Naive thymus-derived CD4-positive, alpha-beta T cell (primary cell): ENCODE measurements at regions of chr1 and their contacts with region 1.

Region 1: DNA sequence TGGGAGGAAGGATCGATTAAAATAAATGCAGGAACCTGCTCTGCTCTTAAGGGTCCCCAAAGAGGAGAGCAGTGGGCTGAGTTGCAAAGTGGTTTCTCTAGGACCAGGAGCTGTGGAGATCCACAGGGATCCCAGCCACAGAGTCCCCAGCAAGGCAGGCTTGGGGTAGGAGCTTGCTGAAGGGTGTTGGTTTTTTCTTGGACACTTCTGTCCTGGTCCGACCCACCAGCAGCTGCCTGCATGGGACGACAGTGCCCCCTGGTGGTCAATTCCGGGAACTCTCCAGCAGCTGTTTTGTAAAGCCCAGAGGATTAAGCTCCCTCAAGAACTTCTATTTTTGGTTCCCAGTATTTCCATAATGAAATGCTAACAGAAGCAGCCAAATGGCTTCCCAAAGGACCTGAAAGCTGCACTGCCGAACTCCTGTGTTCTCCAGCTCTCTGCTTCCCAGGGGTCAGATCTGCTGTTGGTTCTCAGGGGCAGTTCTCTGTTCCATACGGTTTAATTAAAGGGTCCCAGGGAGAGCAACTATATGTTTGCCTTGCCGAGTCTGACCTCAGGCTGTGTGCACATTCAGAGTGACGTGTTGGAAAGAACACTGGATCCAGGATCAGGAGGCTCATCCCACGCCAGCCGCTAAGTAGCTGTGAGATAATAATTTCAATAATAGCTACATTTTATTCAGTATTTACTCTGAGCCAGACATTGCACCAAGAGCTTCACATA is 23.2 kb downstream of the NENF start:
- DNase-seq: peak; percentile 53 to 84 (median 69)
- ATAC-seq: peak; percentile 84
- H3K4me3 ChIP-seq: no peak overlapping the region
- H3K4me3 Mint-ChIP-seq: no peak overlapping the region
- H3K27ac ChIP-seq: no peak overlapping the region
- H3K27ac Mint-ChIP-seq: no peak overlapping the region
- H3K4me1 ChIP-seq: no peaks in the 10 kb centered on the region
- H3K4me1 Mint-ChIP-seq: peaks cover 0 to 12% (median 0%) of the 10 kb centered on the region in 7 donors
- H3K27me3 ChIP-seq: no peaks in the 10 kb centered on the region
- H3K27me3 Mint-ChIP-seq: no peaks in the 10 kb centered on the region

Region 2: DNA sequence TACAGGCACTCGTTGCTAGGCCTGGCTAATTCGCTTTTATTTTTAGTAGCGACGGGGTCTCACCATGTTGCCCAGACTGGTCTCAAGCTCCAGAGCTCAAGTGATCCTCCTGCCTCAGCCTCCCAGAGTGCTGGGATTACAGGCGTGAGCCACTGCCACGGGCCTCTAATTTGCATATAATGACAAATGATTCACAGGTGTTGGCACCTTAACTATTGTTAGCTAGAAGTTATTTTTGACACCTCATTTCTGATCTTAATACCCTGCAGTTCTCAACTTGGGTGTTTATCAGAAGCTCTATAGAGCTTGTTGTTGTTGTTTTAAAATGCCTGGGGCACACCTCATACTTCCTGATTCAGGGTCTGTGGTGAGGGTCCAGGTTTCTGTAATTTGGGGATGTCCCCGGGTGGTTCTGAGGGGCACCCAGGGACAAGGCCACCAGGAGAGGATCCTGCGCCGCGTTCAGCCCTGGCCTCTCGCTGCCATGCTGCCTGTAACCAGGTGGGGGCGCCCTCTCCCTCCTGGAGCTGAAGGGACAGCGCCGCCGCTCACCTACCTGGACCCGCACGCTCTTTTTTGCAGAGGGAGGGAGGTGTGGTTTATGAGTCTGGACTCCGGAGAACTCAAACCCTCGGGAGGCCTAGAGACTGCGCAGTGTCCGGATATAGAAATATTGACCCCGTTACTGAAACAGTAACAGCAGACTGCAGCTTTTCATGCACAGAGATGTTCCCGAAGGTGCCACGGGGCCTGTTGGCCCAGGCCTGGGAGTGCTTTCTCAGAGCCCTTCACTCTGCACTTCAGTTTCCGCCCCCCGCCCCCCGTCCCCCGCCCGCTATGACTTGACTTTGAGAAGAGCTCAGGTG is 757.6 kb before region 1 on chr1:
- CTCF ChIA-PET with region 1: interaction called, 6 read pairs
- POLR2A ChIA-PET with region 1: no interaction called
- intact Hi-C with region 1: loop called (anchors 5 kb)
- DNase-seq: peak; percentile 60 to 87 (median 72)
- ATAC-seq: peak; percentile 96
- H3K4me3 ChIP-seq: no peak overlapping the region
- H3K4me3 Mint-ChIP-seq: peak overlapping the region; percentile 23 to 83 (median 65)
- H3K27ac ChIP-seq: no peak overlapping the region
- H3K27ac Mint-ChIP-seq: peak overlapping the region in 2 of 9 donors; percentile 5 to 62
- H3K4me1 ChIP-seq: peaks cover 4 to 16% of the 10 kb centered on the region in 2 donors
- H3K4me1 Mint-ChIP-seq: peaks cover 0 to 42% (median 9%) of the 10 kb centered on the region in 7 donors
- H3K27me3 ChIP-seq: no peaks in the 10 kb centered on the region
- H3K27me3 Mint-ChIP-seq: peaks cover 0 to 37% (median 0%) of the 10 kb centered on the region in 5 donors

Region 3: DNA sequence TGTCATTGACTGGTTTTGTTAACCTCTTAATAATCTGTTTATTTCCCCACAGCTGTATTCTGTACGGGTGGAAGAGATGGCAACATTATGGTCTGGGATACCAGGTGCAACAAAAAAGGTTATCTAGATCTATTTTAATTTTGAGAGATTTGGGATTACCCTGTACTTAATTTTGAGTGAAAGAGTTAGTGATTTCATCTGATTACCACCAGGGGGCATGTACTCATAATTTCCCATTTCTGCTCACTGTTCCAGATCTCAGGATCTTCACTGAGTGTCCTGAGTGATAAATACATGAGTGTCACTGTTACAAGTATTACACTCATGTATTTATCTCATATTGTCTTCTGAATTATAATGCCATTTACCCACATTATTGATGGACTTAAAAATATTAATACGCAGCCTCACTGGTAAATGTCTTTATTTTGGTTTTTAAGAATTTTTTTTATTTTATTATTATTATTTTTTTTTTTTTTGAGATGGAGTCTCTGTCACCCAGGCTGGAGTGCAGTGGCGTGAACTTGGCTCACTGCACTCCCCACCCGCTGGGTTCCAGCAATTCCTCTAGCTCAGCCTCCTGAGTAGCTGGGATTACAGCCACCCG is 393.0 kb before region 1 on chr1:
- CTCF ChIA-PET with region 1: interaction called, 96 read pairs
- POLR2A ChIA-PET with region 1: no interaction called
- intact Hi-C with region 1: loop called (anchors 1 kb)
- DNase-seq: peak in 6 of 9 donors; percentile 8 to 41 (median 33)
- ATAC-seq: peak; percentile 71
- H3K4me3 ChIP-seq: no peak overlapping the region
- H3K4me3 Mint-ChIP-seq: no peak overlapping the region
- H3K27ac ChIP-seq: no peak overlapping the region
- H3K27ac Mint-ChIP-seq: no peak overlapping the region
- H3K4me1 ChIP-seq: no peaks in the 10 kb centered on the region
- H3K4me1 Mint-ChIP-seq: peaks cover 0 to 11% (median 0%) of the 10 kb centered on the region in 7 donors
- H3K27me3 ChIP-seq: no peaks in the 10 kb centered on the region
- H3K27me3 Mint-ChIP-seq: no peaks in the 10 kb centered on the region

Region 4: DNA sequence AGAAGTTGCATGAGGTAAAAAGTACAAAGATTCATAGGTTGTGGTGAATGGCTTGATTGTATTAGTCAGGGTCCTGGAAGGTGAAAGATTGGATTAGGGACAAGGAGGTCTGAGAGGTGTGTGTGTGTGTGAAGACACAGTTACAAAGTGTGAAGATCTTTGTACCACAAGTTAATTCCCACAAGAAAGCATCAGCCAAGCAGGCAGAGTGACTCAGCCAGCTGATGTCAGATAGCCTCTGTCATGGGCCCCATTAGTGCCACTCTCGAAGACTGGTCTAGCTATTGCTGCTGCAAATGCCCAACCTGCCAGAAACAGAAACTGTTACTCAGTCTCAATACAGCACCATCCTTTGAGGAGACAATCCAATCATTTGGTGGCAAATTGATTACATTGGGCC is 323.9 kb before region 1 on chr1:
- CTCF ChIA-PET with region 1: no interaction called
- POLR2A ChIA-PET with region 1: no interaction called
- intact Hi-C with region 1: no loop called
- DNase-seq: no peak
- ATAC-seq: peak; percentile 51
- H3K4me3 ChIP-seq: no peak overlapping the region
- H3K4me3 Mint-ChIP-seq: no peak overlapping the region
- H3K27ac ChIP-seq: no peak overlapping the region
- H3K27ac Mint-ChIP-seq: no peak overlapping the region
- H3K4me1 ChIP-seq: no peaks in the 10 kb centered on the region
- H3K4me1 Mint-ChIP-seq: peaks cover 0 to 2% (median 0%) of the 10 kb centered on the region in 7 donors
- H3K27me3 ChIP-seq: no peaks in the 10 kb centered on the region
- H3K27me3 Mint-ChIP-seq: no peaks in the 10 kb centered on the region

Region 5: GRCh38 chr1:212247179-212247721 is 208.7 kb before region 1 on chr1:
- CTCF ChIA-PET with region 1: no interaction called
- POLR2A ChIA-PET with region 1: no interaction called
- intact Hi-C with region 1: no loop called
- DNase-seq: no peak
- ATAC-seq: no peak
- H3K4me3 ChIP-seq: no peak overlapping the region
- H3K4me3 Mint-ChIP-seq: no peak overlapping the region
- H3K27ac ChIP-seq: no peak overlapping the region
- H3K27ac Mint-ChIP-seq: no peak overlapping the region
- H3K4me1 ChIP-seq: peaks cover 7 to 8% of the 10 kb centered on the region in 2 donors
- H3K4me1 Mint-ChIP-seq: peaks cover 23 to 36% (median 29%) of the 10 kb centered on the region in 7 donors
- H3K27me3 ChIP-seq: peaks cover 0 to 3% of the 10 kb centered on the region in 2 donors
- H3K27me3 Mint-ChIP-seq: peaks cover 0 to 9% (median 3%) of the 10 kb centered on the region in 5 donors

Region 6: DNA sequence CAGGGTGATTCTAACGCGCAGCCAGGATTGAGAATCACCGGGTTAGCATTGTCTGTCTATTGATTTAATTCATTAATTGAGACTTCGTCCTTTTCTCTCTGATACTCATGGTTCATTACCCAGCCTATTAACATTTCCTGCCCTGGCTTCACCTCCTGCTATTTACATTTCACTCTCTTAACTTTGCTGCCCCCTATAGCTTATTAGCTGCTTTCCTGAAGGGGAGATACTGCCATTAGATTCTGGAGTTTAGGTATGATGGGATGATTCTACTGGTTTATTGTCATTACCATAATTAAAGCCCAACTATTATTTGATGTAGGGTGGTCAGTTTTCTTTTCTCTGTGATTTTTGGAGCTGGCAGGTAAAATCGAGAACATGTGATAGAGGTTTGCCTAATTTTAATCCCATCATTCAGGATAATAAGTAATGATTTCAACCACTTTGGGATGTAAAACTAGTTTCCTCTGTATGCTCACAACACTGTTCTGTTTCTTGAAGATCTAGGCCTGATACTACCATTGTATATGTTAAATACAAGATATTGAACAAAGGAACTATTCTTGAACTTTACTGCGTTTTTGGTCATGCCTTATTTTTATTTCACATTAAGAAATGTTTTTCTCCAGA is 164.3 kb before region 1 on chr1:
- CTCF ChIA-PET with region 1: interaction called, 19 read pairs
- POLR2A ChIA-PET with region 1: no interaction called
- intact Hi-C with region 1: loop called (anchors 1 kb)
- DNase-seq: peak in 7 of 9 donors; percentile 34 to 60 (median 43)
- ATAC-seq: peak; percentile 90
- H3K4me3 ChIP-seq: no peak overlapping the region
- H3K4me3 Mint-ChIP-seq: peak overlapping the region; percentile 30 to 98 (median 67)
- H3K27ac ChIP-seq: no peak overlapping the region
- H3K27ac Mint-ChIP-seq: peak overlapping the region in 7 of 9 donors; percentile 6 to 70 (median 38)
- H3K4me1 ChIP-seq: peaks cover 48 to 74% of the 10 kb centered on the region in 2 donors
- H3K4me1 Mint-ChIP-seq: peaks cover 55 to 91% (median 82%) of the 10 kb centered on the region in 7 donors
- H3K27me3 ChIP-seq: no peaks in the 10 kb centered on the region
- H3K27me3 Mint-ChIP-seq: no peaks in the 10 kb centered on the region

Region 7: DNA sequence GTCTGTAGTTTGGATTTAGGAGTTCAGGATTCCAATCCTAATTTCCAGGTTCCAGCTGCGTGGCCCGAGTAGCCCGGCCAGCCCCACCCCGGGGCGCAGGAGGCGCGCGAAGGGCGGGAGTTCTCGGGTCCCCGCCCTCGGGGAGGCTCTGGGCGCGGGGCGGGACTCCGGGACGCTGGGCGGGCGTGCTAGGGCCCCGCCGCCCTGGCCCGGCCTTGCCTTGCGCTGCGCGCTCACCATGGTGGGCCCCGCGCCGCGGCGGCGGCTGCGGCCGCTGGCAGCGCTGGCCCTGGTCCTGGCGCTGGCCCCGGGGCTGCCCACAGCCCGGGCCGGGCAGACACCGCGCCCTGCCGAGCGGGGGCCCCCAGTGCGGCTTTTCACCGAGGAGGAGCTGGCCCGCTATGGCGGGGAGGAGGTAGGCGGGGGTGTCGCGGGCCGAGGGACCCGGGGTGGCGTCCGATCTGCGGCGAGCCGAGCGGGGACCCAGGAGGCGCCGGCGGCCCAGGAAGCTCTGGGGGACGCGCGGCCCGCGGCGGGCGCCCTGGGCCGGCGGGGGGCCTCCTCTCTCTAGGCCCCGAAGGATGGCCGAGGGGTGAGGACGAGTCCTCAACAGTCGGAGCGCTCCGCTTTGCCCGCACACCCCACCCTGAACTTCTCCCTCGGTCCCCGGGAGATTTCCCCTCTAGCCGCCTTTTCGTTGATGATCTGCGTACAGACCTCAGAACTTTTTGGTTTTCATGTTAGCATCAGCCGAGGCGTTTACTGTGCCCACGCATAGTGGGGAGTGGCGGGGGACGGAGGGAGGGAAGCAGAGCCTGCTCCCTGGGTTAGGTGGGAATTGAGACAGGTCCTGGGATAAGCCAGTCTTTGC is 23.0 kb before region 1 on chr1 and contains the start of gene NENF:
- CTCF ChIA-PET with region 1: interaction called, 14 read pairs
- POLR2A ChIA-PET with region 1: no interaction called
- intact Hi-C with region 1: loop called (anchors 1 to 2 kb)
- DNase-seq: peak; percentile 53 to 85 (median 72)
- ATAC-seq: peak; percentile 99
- H3K4me3 ChIP-seq: peak within 1 kb of the TSS; percentile 62
- H3K4me3 Mint-ChIP-seq: peak within 1 kb of the TSS; percentile 77 to 87 (median 82)
- H3K27ac ChIP-seq: peak within 1 kb of the TSS; percentile 77
- H3K27ac Mint-ChIP-seq: peak within 1 kb of the TSS; percentile 42 to 86 (median 63)
- H3K4me1 ChIP-seq: peaks cover 9 to 21% of the 10 kb centered on the region in 2 donors
- H3K4me1 Mint-ChIP-seq: peaks cover 18 to 44% (median 30%) of the 10 kb centered on the region in 7 donors
- H3K27me3 ChIP-seq: no peaks in the 10 kb centered on the region
- H3K27me3 Mint-ChIP-seq: peaks cover 0 to 4% (median 0%) of the 10 kb centered on the region in 5 donors
- total RNA-seq, gene NENF: 16.0 to 23.5 (median 21.0) TPM

Region 8: GRCh38 chr1:212514056-212514614 is 58.2 kb after region 1 on chr1:
- CTCF ChIA-PET with region 1: no interaction called
- POLR2A ChIA-PET with region 1: no interaction called
- intact Hi-C with region 1: no loop called
- DNase-seq: peak in 2 of 9 donors; percentile 8 to 14
- ATAC-seq: peak; percentile 34
- H3K4me3 ChIP-seq: no peak overlapping the region
- H3K4me3 Mint-ChIP-seq: peak overlapping the region in 8 of 10 donors; percentile 29 to 78 (median 56)
- H3K27ac ChIP-seq: no peak overlapping the region
- H3K27ac Mint-ChIP-seq: no peak overlapping the region
- H3K4me1 ChIP-seq: peaks cover 0 to 8% of the 10 kb centered on the region in 2 donors
- H3K4me1 Mint-ChIP-seq: peaks cover 1 to 13% (median 6%) of the 10 kb centered on the region in 7 donors
- H3K27me3 ChIP-seq: peaks cover 0 to 7% of the 10 kb centered on the region in 2 donors
- H3K27me3 Mint-ChIP-seq: peaks cover 50 to 76% (median 57%) of the 10 kb centered on the region in 5 donors

Region 9: DNA sequence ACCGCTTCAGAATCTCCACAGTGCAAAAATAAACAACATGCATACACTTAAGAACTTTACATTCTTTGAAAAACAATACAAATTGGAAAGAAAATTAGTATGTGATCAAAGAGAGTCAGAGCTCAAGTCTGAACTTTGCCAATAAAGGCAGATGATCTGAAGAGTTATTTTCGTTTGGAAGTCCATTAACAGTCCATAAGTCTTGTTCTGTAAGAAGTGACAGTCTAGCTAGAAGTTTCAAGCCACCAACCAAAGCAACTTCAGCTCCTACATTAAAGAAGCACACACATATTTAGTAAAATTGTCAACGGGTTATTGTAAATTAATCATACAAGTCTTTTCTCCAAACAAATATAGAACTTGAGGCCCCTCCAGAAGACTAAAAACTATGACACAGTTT is 539.0 kb after region 1 on chr1:
- CTCF ChIA-PET with region 1: interaction called, 4 read pairs
- POLR2A ChIA-PET with region 1: no interaction called
- intact Hi-C with region 1: loop called (anchors 1 to 5 kb)
- DNase-seq: no peak
- ATAC-seq: no peak
- H3K4me3 ChIP-seq: no peak overlapping the region
- H3K4me3 Mint-ChIP-seq: no peak overlapping the region
- H3K27ac ChIP-seq: no peak overlapping the region
- H3K27ac Mint-ChIP-seq: no peak overlapping the region
- H3K4me1 ChIP-seq: no peaks in the 10 kb centered on the region
- H3K4me1 Mint-ChIP-seq: peaks cover 0 to 12% (median 7%) of the 10 kb centered on the region in 7 donors
- H3K27me3 ChIP-seq: no peaks in the 10 kb centered on the region
- H3K27me3 Mint-ChIP-seq: no peaks in the 10 kb centered on the region